Activated CD4-positive, alpha-beta memory T cell treated with anti-CD3 and anti-CD28 coated beads, Interleukin-2, amount 10 ng/mL, durations not matched to agents 7 days and 5 days (primary cell): ENCODE measurements at regions of chr19 and their contacts with region 1.

Region 1: GRCh38 chr19:6737284-6738046 is at the start of gene GPR108:
- DNase-seq: peak; percentile 100
- H3K4me3 Mint-ChIP-seq: peak within 1 kb of the TSS; percentile 93
- H3K27ac Mint-ChIP-seq: peak within 1 kb of the TSS; percentile 99
- H3K4me1 Mint-ChIP-seq: peaks cover 38% of the 10 kb centered on the region
- H3K27me3 Mint-ChIP-seq: no peaks in the 10 kb centered on the region
- total RNA-seq, gene GPR108: 105 to 107 TPM

Region 2: GRCh38 chr19:6577476-6578125 is 159.9 kb before region 1 on chr19:
- CTCF ChIA-PET with region 1: no interaction called
- POLR2A ChIA-PET with region 1: no interaction called
- DNase-seq: peak; percentile 46
- H3K4me3 Mint-ChIP-seq: no peak overlapping the region
- H3K27ac Mint-ChIP-seq: no peak overlapping the region
- H3K4me1 Mint-ChIP-seq: peaks cover 16% of the 10 kb centered on the region
- H3K27me3 Mint-ChIP-seq: no peaks in the 10 kb centered on the region

Region 3: GRCh38 chr19:6632002-6632621 is 105.4 kb before region 1 on chr19:
- CTCF ChIA-PET with region 1: interaction called, 20 read pairs
- POLR2A ChIA-PET with region 1: interaction called, 4 read pairs
- DNase-seq: peak; percentile 81
- H3K4me3 Mint-ChIP-seq: no peak overlapping the region
- H3K27ac Mint-ChIP-seq: no peak overlapping the region
- H3K4me1 Mint-ChIP-seq: peaks cover 31% of the 10 kb centered on the region
- H3K27me3 Mint-ChIP-seq: peaks cover 7% of the 10 kb centered on the region

Region 4: GRCh38 chr19:6654347-6655310 is 82.8 kb before region 1 on chr19:
- CTCF ChIA-PET with region 1: interaction called, 10 read pairs
- POLR2A ChIA-PET with region 1: interaction called, 9 read pairs
- DNase-seq: peak; percentile 76
- H3K4me3 Mint-ChIP-seq: peak overlapping the region; percentile 75
- H3K27ac Mint-ChIP-seq: peak overlapping the region; percentile 98
- H3K4me1 Mint-ChIP-seq: peaks cover 59% of the 10 kb centered on the region
- H3K27me3 Mint-ChIP-seq: no peaks in the 10 kb centered on the region

Region 5: DNA sequence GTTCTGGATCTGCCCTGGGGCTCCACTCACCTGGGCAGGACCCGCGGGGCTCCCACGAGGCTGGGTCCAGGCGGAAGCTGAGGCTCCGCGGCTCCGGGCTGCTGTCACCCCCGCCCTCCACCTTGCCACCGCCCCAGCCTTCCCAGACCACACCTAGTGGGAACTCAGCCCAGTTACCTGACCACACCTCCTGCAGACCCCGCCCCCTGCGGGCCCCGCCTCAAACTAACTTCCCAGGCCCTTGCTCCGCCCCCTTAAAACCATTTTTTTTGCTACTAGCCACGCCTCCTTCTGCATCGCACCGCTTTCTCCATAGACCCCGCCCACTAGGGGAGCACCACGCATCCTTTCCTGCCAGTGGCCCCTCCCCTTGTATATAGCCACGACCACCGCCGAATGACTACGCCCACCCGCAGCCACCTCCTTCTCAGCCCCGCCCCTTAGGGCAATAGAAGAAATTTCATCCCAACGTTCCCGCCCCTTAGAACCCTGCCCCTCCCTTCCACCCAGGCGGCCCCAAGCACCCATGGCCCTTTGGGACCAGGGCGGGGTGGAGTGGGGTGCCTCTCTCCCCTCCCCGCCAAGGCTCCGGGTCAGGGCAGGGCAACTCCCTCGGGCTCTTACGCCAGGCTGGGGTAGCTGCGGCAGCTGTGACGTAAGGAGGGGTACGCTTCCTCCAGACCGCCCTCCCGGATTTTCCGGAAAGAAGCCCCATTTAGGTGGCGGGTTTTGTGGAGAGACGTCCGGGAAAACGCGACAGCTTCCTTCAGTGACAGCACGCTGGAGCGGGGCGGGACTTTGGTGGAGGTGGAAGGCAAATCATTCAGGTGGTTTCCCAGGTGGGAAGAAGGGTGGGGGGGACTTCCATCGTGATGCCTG is 30.1 kb after region 1 on chr19 and contains the start of gene SH2D3A:
- CTCF ChIA-PET with region 1: interaction called, 25 read pairs
- POLR2A ChIA-PET with region 1: interaction called, 10 read pairs
- DNase-seq: peak; percentile 96
- H3K4me3 Mint-ChIP-seq: peak within 1 kb of the TSS; percentile 88
- H3K27ac Mint-ChIP-seq: peak within 1 kb of the TSS; percentile 89
- H3K4me1 Mint-ChIP-seq: peaks cover 53% of the 10 kb centered on the region
- H3K27me3 Mint-ChIP-seq: no peaks in the 10 kb centered on the region
- total RNA-seq, gene SH2D3A: 26.4 to 28.1 TPM

Region 6: DNA sequence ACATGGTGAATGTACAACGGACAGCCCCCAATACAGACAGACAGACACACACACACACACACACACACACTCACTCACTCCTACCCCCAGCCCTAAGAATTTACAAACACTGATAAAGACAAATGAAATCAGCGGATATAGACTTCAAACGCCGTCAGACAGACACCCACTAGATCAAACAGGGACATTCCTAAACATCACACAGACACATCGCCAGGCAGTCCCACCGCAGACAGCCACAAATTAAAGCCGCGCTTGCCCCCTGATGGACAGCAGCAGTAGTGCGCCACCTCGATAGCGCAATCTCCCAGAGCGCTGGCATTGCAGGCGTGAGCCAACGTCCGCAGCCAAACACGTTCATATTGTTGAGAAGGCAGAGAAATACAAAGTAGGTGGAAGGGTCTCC is 125.2 kb after region 1 on chr19:
- CTCF ChIA-PET with region 1: interaction called, 126 read pairs
- POLR2A ChIA-PET with region 1: interaction called, 44 read pairs
- DNase-seq: peak; percentile 92
- H3K4me3 Mint-ChIP-seq: peak overlapping the region; percentile 77
- H3K27ac Mint-ChIP-seq: peak overlapping the region; percentile 67
- H3K4me1 Mint-ChIP-seq: peaks cover 16% of the 10 kb centered on the region
- H3K27me3 Mint-ChIP-seq: no peaks in the 10 kb centered on the region